ENCODE measurements at regions of chr3 and their contacts with region 1.

Region 1: GRCh38 chr3:158419820-158420653 is 151.0 kb upstream of the MLF1 start:
- DNase-seq: no peak
- H3K4me3 ChIP-seq: no peak overlapping the region
- CTCF ChIP-seq: no peak
- POLR2A ChIP-seq: no peak

Region 2: DNA sequence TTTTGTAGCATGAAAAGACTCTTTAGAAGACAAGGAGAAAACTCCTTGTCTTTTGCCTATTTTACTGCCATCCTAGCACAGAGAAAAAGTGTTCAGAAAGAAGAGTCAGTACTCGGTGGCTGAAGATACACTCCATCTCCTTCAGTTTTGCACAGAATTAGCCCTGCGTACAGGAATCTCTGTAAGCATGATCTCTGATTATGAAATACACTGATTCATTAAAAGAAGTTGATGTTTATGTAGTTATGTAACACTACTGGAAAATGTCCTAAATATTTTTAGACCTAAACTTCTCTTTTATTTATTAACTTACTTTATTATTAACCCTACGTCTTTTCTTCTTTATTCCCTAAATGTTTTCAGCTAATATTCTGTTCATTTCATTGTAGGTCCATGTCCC is 1455.5 kb before region 1 on chr3:
- intact Hi-C with region 1: loop called (anchors 10 kb)
- DNase-seq: no peak
- H3K4me3 ChIP-seq: no peak overlapping the region
- CTCF ChIP-seq: no peak
- POLR2A ChIP-seq: no peak

Region 3: DNA sequence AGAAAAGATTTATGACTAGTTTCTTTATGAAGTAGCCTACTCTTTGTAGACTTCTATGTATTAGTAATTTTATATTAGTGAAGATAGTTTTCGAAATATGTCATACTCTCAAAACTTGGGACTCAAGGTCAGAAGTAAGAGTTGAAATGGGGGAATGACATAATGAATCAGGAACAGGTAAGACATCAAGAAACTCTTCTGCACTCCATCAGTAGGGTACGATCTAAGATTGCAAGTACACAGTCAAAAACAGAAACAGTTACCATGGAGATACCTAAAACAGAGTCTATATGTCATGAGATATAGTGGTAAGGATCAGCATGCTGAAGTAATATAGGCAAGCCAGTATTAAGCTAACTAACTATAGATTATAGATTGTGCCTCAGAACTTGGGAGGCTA is 36.0 kb before region 1 on chr3:
- intact Hi-C with region 1: loop called (anchors 2 kb)
- DNase-seq: no peak
- H3K4me3 ChIP-seq: no peak overlapping the region
- CTCF ChIP-seq: no peak
- POLR2A ChIP-seq: no peak

Measured in lower leg skin (tissue), 4 donors.